Mammary epithelial cell (primary cell): ENCODE measurements at regions of chr12 and their contacts with region 1.

Region 1: GRCh38 chr12:123801573-123802178 is 39.6 kb downstream of the DNAH10 start:
- DNase-seq: peak; percentile 12
- H3K4me3 ChIP-seq: no peak overlapping the region
- H3K27ac ChIP-seq: no peak overlapping the region
- H3K4me1 ChIP-seq: no peaks in the 10 kb centered on the region
- H3K27me3 ChIP-seq: peaks cover 2% of the 10 kb centered on the region
- CTCF ChIP-seq: peak; percentile 54 to 69

Region 2: GRCh38 chr12:123502163-123502704 is 299.4 kb before region 1 on chr12:
- CTCF ChIA-PET with region 1: no interaction called
- dilution Hi-C with region 1: no loop called
- in situ Hi-C with region 1: no loop called
- intact Hi-C with region 1: no loop called
- DNase-seq: no peak
- H3K4me3 ChIP-seq: no peak overlapping the region
- H3K27ac ChIP-seq: no peak overlapping the region
- H3K4me1 ChIP-seq: no peaks in the 10 kb centered on the region
- H3K27me3 ChIP-seq: no peaks in the 10 kb centered on the region
- CTCF ChIP-seq: no peak

Region 3: DNA sequence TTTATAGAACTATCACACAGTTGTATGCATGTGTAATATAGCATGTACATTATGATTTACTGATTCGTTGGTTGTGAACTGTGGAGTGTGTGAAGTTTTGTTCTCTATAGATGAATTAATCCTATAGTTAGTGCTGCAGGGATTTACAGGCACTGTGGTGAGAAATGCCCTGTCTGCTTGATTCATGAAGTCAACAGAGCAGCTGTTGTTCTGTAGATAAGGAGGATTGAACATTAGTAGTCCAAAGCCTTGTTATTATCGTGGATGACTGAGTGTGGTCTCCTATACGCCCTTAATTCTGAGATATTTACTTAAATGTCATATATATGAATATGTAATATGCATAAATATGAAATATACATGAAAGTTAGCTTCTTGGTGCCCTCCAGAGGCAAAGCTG is 58.7 kb after region 1 on chr12:
- CTCF ChIA-PET with region 1: no interaction called
- dilution Hi-C with region 1: loop called (anchors 10 kb)
- in situ Hi-C with region 1: no loop called
- intact Hi-C with region 1: no loop called
- DNase-seq: no peak
- H3K4me3 ChIP-seq: no peak overlapping the region
- H3K27ac ChIP-seq: no peak overlapping the region
- H3K4me1 ChIP-seq: no peaks in the 10 kb centered on the region
- H3K27me3 ChIP-seq: peaks cover 2% of the 10 kb centered on the region
- CTCF ChIP-seq: peak in 1 of 2 donors; percentile 8

Region 4: GRCh38 chr12:123934886-123935285 is 133.2 kb after region 1 on chr12:
- CTCF ChIA-PET with region 1: no interaction called
- dilution Hi-C with region 1: no loop called
- in situ Hi-C with region 1: no loop called
- intact Hi-C with region 1: no loop called
- DNase-seq: peak; percentile 4
- H3K4me3 ChIP-seq: no peak overlapping the region
- H3K27ac ChIP-seq: no peak overlapping the region
- H3K4me1 ChIP-seq: no peaks in the 10 kb centered on the region
- H3K27me3 ChIP-seq: no peaks in the 10 kb centered on the region
- CTCF ChIP-seq: no peak

Region 5: GRCh38 chr12:123983822-123984485 is 182.3 kb after region 1 on chr12:
- CTCF ChIA-PET with region 1: interaction called, 6 read pairs
- dilution Hi-C with region 1: no loop called
- in situ Hi-C with region 1: loop called (anchors 10 kb)
- intact Hi-C with region 1: loop called (anchors 1 kb)
- DNase-seq: peak; percentile 57
- H3K4me3 ChIP-seq: no peak overlapping the region
- H3K27ac ChIP-seq: no peak overlapping the region
- H3K4me1 ChIP-seq: no peaks in the 10 kb centered on the region
- H3K27me3 ChIP-seq: no peaks in the 10 kb centered on the region
- CTCF ChIP-seq: peak; percentile 70 to 75

Region 6: DNA sequence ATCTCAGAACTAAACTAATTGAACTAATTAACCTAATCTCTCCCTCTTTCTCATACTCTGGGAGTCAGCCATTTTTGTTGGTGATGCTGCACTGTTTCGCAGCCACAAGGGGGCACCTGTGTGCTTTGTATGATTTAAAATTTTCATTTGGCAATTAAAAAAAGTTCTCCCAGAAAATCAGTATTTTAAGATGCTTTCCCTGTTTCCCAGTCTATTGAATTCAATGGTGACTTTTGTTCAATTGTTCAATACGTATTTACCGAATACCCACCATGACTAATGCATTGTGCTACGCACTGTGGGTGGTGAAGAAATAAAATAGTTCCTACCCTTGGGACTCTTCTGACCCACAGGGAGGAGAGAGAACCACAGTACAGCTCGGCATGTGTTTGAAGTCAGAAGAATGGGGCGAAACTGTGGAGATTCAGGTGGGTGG is 235.0 kb after region 1 on chr12:
- CTCF ChIA-PET with region 1: no interaction called
- dilution Hi-C with region 1: no loop called
- in situ Hi-C with region 1: no loop called
- intact Hi-C with region 1: loop called (anchors 1 kb)
- DNase-seq: no peak
- H3K4me3 ChIP-seq: no peak overlapping the region
- H3K27ac ChIP-seq: no peak overlapping the region
- H3K4me1 ChIP-seq: no peaks in the 10 kb centered on the region
- H3K27me3 ChIP-seq: no peaks in the 10 kb centered on the region
- CTCF ChIP-seq: peak; percentile 82 to 95

Region 7: DNA sequence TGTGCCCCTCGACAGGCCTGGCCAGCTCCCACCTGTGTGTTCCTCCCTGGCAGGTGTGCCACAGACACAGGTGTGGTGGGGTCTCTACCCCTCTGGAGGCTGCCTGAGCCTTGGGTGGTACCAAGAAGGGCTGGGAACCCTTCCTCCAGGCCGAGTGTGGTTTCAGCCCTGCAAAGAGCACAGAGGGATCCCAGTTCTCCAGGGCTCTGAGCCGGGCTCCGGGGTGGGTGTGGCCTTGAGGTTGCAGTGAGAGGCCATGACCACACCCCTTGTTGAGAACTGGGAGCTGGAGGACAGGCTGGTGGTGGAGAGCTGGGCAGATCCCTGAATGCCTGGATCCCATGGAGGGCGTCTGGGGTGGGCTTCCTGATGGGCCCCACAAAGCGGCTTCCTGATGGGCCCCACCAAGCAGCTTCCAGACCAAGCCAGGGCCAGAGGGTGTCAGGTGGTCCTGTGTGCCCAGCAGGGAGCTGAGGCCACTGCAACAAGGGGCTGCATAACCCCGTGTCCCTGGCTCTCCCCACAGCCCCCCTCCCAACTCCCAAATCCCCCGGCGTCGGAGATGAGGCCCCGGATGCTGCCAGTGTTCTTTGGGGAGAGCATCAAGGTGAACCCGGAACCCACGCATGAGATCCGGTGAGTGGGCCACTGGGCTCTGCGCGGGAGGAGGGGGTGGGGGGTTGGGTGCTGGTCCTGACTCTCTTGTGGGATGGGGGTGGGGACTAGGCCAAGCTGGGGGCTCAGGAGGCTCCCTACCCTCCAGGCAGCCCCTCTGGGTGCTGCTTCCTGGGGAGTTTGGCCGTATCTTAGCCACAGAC is 509.8 kb after region 1 on chr12:
- CTCF ChIA-PET with region 1: no interaction called
- dilution Hi-C with region 1: no loop called
- in situ Hi-C with region 1: no loop called
- intact Hi-C with region 1: loop called (anchors 10 kb)
- DNase-seq: no peak
- H3K4me3 ChIP-seq: no peak overlapping the region
- H3K27ac ChIP-seq: no peak overlapping the region
- H3K4me1 ChIP-seq: no peaks in the 10 kb centered on the region
- H3K27me3 ChIP-seq: peaks cover 2% of the 10 kb centered on the region
- CTCF ChIP-seq: no peak